ENCODE measurements at regions of chr6 and their contacts with region 1.

Region 1: DNA sequence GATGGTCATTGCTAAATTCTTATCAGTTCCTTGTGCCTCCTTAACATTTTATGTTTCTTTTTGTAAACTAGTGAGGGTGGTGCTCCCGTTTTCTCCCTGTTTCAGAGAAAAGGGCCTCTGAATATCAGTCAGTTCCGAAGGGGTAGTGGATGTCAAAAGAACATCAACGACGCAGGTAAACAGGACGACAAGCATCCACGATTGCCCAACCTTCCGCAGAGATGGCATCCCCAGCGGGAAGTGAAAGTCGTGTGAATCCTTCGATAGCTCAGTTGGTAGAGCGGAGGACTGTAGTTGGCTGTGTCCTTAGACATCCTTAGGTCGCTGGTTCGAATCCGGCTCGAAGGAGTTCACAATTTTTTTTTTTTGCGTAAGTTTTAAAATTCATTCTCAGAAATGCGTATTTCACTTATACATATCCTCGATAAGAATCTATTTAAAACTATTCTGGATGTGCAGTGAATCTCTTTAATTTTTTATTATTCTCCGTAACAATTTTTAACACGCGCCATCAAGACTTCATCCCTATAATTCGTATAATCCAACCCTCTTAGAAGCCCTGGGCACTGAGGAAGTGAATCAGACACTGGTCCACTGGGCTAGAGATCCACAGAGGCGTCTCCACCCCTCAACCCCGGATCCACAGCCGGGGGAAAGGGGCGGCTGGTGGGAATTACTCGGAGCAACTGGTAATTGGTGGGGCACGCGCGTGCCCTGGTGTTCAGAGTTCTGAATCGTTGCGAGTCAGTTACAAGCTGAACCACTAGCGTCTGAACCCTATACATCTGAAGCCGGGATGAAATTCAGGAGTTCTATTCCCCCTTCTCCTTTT is 27.9 kb upstream of the ABT1 start:
- DNase-seq: peak; percentile 89
- ATAC-seq: peak; percentile 80

Region 2: GRCh38 chr6:26312501-26313390 is 256.1 kb before region 1 on chr6:
- intact Hi-C with region 1: loop called (anchors 5 kb)
- DNase-seq: peak; percentile 79
- ATAC-seq: peak; percentile 92

Region 3: GRCh38 chr6:26342106-26343004 is 226.5 kb before region 1 on chr6:
- intact Hi-C with region 1: loop called (anchors 5 kb)
- DNase-seq: no peak
- ATAC-seq: no peak

Region 4: GRCh38 chr6:26532699-26533531 is 35.9 kb before region 1 on chr6:
- intact Hi-C with region 1: loop called (anchors 2 kb)
- DNase-seq: peak; percentile 91
- ATAC-seq: peak; percentile 76

Region 5: GRCh38 chr6:26553635-26554446 is 15.0 kb before region 1 on chr6:
- intact Hi-C with region 1: loop called (anchors 1 kb)
- DNase-seq: peak; percentile 80
- ATAC-seq: peak; percentile 83

Region 6: GRCh38 chr6:26596579-26597388 is 28.0 kb after region 1 on chr6 and contains the start of gene ABT1:
- intact Hi-C with region 1: loop called (anchors 2 kb)
- DNase-seq: peak; percentile 98
- ATAC-seq: peak; percentile 98
- total RNA-seq, gene ABT1: 7.6 TPM